ENCODE measurements at regions of chr16 and their contacts with region 1.

Region 1: DNA sequence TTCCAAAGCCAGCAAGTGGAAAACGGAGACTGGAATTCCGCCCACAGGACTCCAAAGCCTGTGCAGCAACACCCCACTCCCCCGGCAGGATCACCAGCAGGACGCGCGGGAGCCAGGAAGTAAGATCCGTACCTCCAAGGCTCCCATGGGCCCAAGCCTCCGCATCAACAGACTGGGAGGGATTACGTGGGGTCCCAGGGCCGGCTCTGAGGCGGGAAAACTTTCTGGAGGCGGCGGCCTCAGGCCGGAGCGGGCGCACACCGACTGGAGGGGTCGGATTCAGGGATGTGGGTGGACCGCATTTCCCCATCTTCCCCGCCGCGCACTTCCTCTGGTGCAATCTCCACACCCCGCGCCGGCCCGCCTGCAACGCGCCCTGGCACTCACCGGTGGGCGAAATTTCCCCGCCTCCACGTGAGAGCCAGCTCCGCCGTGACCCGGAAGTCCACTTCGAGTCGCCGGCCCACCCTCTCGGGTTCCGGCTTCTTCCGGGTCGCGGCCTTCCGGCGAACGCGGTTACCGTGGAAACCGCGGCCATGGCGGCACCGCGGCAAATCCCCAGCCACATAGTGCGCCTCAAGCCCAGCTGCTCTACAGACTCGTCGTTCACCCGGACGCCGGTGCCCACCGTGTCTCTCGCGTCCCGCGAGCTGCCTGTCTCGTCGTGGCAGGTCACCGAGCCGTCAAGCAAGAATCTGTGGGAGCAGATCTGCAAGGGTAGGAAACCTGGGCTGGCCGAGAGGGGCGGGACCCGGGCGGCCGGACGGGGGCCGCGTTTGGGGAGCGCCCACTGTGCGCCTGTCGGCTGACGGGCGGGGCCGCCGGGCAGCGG is at the starts of genes IQCK and KNOP1:
- DNase-seq: peak; percentile 93
- ATAC-seq: peak; percentile 93
- H3K4me3 Mint-ChIP-seq: peak within 1 kb of the TSS; percentile 95
- H3K27ac Mint-ChIP-seq: peak within 1 kb of the TSS; percentile 87
- H3K4me1 Mint-ChIP-seq: peaks cover 23% of the 10 kb centered on the region
- H3K27me3 Mint-ChIP-seq: no peaks in the 10 kb centered on the region
- total RNA-seq, gene IQCK: 2.7 to 3.5 TPM
- total RNA-seq, gene KNOP1: 28.9 to 29.5 TPM

Region 2: DNA sequence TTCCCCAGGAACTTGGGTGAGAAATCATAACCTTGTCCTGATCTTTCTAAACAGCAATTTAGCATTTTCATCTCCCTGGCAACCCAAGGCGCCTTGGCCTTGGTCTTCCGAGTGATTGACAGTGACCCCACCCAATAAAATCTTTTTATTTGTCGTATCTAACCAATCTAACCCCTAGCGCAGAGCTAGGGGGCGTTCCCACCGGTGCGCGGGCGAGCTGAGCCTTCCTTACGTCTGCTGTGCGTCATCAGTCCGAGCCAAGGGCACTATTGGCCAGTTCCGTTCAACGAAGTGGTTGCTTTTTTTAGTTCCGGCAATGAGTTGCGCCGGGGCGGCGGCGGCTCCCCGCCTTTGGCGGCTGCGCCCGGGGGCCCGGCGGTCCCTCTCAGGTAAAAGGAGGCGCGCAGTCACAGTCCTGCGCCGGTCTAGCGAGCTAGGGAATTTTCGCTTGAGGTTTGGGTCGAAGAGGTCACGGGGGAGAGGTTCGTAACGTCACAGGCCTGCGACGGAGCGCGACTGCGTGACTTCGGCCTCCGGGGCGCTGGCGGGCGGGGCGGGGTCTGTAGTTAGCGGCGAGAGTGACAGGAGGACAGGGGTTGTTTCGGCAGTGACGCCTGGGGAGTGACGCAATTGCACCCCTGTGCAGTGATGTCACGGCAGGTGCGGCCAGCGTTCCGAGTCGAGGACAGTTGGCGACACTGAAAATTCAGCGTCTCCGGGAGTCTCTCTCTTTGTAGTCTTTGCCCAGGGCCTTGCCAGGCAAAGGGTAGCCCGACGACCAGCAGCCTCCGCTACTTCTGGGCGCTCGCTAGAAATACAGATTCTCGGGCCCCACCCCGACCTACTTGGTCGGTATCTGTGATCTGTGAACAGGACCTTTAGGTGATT is 650.4 kb before region 1 on chr16 and contains the start of gene COQ7:
- CTCF ChIA-PET with region 1: no interaction called
- POLR2A ChIA-PET with region 1: no interaction called
- intact Hi-C with region 1: loop called in 1 of 2 experiments (anchors 1 kb)
- DNase-seq: peak; percentile 99
- ATAC-seq: peak; percentile 95
- H3K4me3 Mint-ChIP-seq: peak within 1 kb of the TSS; percentile 86
- H3K27ac Mint-ChIP-seq: peak within 1 kb of the TSS; percentile 96
- H3K4me1 Mint-ChIP-seq: peaks cover 10% of the 10 kb centered on the region
- H3K27me3 Mint-ChIP-seq: peaks cover 2% of the 10 kb centered on the region
- total RNA-seq, gene COQ7: 13.2 to 16.0 TPM

Region 3: DNA sequence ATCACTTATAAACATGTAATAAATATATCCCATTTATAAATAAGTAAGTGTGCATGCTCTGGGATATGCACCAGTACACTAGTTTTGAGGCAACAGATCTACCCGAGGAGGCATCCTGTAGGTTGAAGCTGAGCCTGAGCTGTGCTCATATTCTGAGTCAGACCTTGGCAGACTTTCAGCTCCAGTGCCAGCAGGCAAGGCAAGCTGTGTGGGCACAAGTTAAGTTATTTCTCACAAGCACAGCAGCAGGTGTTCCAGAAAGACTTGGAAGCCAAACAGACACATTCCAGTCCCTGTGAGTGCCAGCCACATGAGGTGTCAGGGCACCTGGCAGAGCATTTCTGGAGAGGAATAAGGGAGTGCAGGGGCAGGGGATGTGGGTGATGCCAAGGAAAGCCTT is 433.8 kb before region 1 on chr16:
- CTCF ChIA-PET with region 1: no interaction called
- POLR2A ChIA-PET with region 1: no interaction called
- intact Hi-C with region 1: no loop called
- DNase-seq: peak; percentile 55
- ATAC-seq: peak; percentile 80
- H3K4me3 Mint-ChIP-seq: no peak overlapping the region
- H3K27ac Mint-ChIP-seq: no peak overlapping the region
- H3K4me1 Mint-ChIP-seq: peaks cover 9% of the 10 kb centered on the region
- H3K27me3 Mint-ChIP-seq: peaks cover 7% of the 10 kb centered on the region

Region 4: DNA sequence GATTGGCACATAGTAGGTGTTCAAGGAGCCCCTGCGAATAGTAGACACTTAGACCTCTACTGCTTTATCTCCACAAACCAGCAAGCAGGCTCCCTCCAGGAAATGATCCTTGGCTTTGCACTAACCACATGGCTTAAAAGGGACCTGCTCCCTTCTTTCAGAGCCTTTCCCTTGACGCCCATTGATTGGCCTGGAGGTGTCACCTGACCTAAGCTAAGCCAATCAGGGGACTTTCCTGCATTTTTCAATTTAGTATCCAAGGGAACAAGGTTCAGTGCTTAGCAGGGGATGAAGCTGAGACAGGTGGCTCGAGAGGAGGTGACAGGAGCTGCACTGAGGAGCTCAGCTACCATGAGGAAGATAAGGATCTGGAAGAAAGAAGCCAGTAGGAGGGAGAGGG is 379.7 kb before region 1 on chr16:
- CTCF ChIA-PET with region 1: no interaction called
- POLR2A ChIA-PET with region 1: no interaction called
- intact Hi-C with region 1: no loop called
- DNase-seq: no peak
- ATAC-seq: no peak
- H3K4me3 Mint-ChIP-seq: no peak overlapping the region
- H3K27ac Mint-ChIP-seq: no peak overlapping the region
- H3K4me1 Mint-ChIP-seq: no peaks in the 10 kb centered on the region
- H3K27me3 Mint-ChIP-seq: peaks cover 8% of the 10 kb centered on the region

Region 5: DNA sequence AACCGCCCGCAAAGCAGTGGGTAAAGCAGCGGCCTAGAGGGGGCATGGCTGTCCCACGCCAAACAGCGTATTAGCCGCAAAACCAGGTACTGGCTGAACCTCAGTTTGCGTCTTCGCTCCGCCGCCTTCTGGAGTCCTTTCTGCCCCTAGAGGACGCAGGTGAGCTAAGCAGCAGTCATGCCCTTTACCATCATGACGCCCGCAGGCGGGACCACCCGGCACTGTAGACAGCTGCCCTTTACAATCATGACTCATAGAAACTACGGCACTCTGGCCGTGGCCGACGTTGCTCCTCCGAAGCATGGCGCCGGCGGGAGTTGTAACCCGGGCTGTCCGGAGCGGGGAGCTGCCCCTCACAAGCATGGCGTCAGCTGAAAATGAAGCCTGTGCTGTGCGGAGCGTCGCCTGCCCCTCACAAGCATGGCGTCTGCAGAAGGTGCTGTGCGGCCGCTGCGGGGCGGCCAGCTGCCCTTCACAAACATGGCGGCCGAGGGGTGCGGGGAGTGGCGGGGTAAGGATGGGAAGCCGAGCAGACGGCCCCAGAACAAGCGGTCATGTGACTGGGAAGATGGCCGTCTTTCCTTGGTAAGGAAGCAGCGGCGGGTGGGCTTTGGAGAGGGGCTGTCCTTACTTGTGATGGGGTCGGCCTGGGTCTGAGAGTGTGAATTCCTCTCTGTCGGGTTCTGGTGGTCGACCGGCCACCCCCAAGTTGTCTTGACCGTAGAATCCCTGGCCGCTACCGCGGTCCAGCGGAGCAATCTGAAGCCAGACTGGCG is 162.6 kb before region 1 on chr16 and contains the start of gene VPS35L:
- CTCF ChIA-PET with region 1: interaction called, 3 read pairs
- POLR2A ChIA-PET with region 1: no interaction called
- intact Hi-C with region 1: loop called (anchors 1 to 5 kb)
- DNase-seq: peak; percentile 96
- ATAC-seq: peak; percentile 97
- H3K4me3 Mint-ChIP-seq: peak within 1 kb of the TSS; percentile 86
- H3K27ac Mint-ChIP-seq: peak within 1 kb of the TSS; percentile 87
- H3K4me1 Mint-ChIP-seq: peaks cover 20% of the 10 kb centered on the region
- H3K27me3 Mint-ChIP-seq: no peaks in the 10 kb centered on the region
- total RNA-seq, gene VPS35L: 30.7 to 31.6 TPM

Region 6: GRCh38 chr16:19645557-19645981 is 72.4 kb before region 1 on chr16:
- CTCF ChIA-PET with region 1: no interaction called
- POLR2A ChIA-PET with region 1: no interaction called
- intact Hi-C with region 1: no loop called
- DNase-seq: no peak
- ATAC-seq: no peak
- H3K4me3 Mint-ChIP-seq: no peak overlapping the region
- H3K27ac Mint-ChIP-seq: no peak overlapping the region
- H3K4me1 Mint-ChIP-seq: peaks cover 2% of the 10 kb centered on the region
- H3K27me3 Mint-ChIP-seq: no peaks in the 10 kb centered on the region

Region 7: GRCh38 chr16:19696328-19696727 is 21.7 kb before region 1 on chr16:
- CTCF ChIA-PET with region 1: interaction called, 3 read pairs
- POLR2A ChIA-PET with region 1: interaction called, 3 read pairs
- intact Hi-C with region 1: loop called in 1 of 2 experiments (anchors 1 kb)
- DNase-seq: peak; percentile 74
- ATAC-seq: peak; percentile 47
- H3K4me3 Mint-ChIP-seq: peak overlapping the region; percentile 17
- H3K27ac Mint-ChIP-seq: peak overlapping the region; percentile 75
- H3K4me1 Mint-ChIP-seq: peaks cover 65% of the 10 kb centered on the region
- H3K27me3 Mint-ChIP-seq: no peaks in the 10 kb centered on the region

Region 8: DNA sequence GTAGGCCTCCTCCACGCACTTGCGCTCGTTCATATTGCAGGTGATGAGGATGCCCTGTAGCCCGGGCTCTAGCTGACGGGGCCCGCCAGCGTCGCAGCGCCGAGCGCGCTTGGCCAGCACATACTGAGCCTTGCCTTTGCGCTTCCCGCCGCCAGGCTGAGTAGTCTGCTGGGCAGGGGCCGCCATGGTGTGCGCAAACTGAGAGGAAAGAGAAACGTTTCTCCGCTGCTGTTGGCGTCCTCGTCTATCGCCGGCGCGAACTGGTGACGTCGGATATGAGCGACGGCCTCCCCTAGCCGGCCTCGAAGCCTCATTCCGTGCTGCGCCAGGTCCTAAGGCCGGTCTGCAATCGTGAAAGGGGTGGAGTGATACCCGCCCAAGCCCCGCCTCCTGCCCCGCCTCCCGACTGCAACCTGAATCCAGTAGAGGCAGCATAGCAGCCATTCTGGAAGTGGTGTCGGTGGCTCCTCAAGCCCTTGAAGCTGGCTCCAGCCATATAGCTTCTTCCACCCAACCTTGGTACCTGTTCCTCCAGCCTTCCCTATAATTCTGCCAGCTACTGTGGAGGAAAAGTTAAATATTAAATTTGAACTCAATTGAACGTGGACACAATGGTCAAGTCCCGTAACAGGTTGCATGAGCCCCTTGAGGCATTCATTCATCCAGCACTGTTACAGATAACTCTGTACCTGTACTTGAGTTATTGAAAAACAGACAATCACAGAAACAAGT is 1023.7 kb after region 1 on chr16 and contains the start of gene THUMPD1:
- CTCF ChIA-PET with region 1: no interaction called
- POLR2A ChIA-PET with region 1: no interaction called
- intact Hi-C with region 1: loop called in 1 of 2 experiments (anchors 1 kb)
- DNase-seq: peak; percentile 99
- ATAC-seq: peak; percentile 95
- H3K4me3 Mint-ChIP-seq: peak within 1 kb of the TSS; percentile 92
- H3K27ac Mint-ChIP-seq: peak within 1 kb of the TSS; percentile 95
- H3K4me1 Mint-ChIP-seq: peaks cover 27% of the 10 kb centered on the region
- H3K27me3 Mint-ChIP-seq: no peaks in the 10 kb centered on the region
- total RNA-seq, gene THUMPD1: 38.0 to 48.2 TPM